ENCODE measurements at regions of chr16 and their contacts with region 1.

Region 1: DNA sequence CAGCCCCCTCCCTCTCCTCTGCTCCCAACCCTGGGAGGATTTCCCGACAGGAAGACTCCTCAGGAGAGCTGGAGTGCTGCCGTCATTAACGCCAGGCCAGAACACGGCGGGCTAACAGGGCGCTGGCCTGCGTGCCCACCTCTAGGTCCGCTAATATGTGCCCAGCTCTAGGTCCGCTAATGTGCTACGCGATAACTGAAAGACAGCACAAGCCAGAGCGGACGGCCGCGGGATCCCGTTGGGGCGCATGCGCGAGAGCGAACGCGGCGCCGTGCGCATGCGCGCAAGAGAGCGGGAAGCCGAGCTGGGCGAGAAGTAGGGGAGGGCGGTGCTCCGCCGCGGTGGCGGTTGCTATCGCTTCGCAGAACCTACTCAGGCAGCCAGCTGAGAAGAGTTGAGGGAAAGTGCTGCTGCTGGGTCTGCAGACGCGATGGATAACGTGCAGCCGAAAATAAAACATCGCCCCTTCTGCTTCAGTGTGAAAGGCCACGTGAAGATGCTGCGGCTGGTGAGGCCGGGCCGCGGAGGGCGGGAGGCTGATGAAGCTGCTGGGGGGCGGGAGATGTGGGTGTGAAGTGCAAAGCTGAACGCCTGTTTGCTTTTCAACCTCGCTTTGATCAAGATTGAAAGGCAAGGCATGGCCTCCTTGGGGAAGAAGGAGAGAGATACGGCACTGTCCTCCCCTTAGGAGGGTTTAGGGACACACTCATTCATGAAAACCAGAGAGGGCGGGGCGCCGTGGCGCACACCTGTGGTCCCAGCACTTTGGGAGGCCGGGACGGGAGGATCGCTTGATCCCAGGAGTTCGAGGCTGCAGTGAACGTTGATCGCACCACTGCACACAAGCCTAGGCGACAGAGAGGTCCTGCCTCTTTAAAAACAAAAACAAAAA is at the start of gene CKLF:
- DNase-seq: peak; percentile 87
- H3K4me3 ChIP-seq: peak within 1 kb of the TSS; percentile 55
- H3K27ac ChIP-seq: peak within 1 kb of the TSS; percentile 86
- H3K4me1 ChIP-seq: peaks cover 5% of the 10 kb centered on the region
- H3K27me3 ChIP-seq: no peaks in the 10 kb centered on the region
- CTCF ChIP-seq: no peak
- total RNA-seq, gene CKLF: 41.5 to 58.4 TPM

Region 2: DNA sequence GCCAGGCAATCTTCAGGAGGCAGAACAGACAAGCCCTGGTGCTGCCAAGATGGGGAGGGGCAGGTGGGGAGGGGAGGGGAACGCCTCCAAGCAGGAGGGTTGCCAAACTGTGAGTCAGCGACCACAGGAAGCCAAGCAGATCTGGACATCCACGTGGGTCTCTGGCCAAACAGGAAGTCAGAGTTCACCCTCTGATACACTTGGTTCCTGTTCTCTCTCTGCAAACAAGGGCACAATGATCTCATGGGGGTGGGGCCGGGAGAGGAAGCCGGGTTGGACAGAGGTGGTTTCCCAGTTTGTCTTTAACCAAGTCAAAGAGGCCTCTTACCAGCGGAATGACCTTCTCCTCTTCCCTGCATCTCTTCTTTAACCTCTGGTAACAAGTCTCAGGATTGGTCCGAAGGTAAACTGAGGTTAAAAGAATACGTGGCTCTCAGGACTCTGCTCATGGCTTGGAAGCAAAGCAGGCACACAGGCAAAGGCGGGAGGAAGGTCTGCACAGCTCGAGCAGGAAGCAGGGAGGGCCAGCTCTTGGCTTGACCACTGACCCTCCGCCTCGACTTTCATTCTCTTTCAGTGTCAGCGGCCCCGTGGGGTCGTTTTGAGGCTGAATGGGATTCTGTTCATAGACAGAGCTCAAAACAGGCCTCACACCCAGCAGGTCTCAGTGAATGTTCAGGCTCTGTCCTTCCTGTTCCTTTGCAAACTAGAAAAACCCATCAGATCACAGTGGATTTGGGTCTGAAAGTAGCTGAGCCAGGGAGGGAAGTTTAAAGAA is 35.5 kb before region 1 on chr16:
- intact Hi-C with region 1: loop called (anchors 5 kb)
- DNase-seq: peak; percentile 99
- H3K4me3 ChIP-seq: no peak overlapping the region
- H3K27ac ChIP-seq: peak overlapping the region; percentile 97
- H3K4me1 ChIP-seq: peaks cover 18% of the 10 kb centered on the region
- H3K27me3 ChIP-seq: no peaks in the 10 kb centered on the region
- CTCF ChIP-seq: no peak

Region 3: DNA sequence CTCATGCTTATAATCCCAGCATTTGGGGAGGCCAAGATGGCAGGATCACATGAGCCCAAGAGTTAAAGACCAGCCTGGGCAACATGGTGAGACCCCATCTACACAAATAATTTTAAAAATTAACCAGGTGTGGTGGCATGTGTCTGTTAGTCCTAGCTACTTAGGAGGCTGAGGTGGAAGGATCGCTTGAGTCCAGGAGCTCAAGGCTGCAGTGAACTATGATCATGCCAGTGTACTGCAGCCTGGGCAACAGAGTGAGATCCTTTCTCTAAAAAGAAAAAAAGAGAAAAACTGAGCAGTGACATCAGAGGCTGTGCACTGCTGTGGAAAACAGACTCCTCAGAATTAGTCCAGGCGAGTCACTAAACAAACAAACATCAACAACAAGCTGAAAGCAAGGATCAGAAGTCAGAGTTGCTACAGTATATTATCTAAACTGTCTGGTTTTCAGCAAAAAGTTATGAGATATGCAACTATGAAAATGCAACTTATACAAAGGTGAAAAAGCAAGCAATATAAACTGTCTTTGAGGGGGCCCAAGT is 515.8 kb after region 1 on chr16:
- intact Hi-C with region 1: no loop called
- DNase-seq: no peak
- H3K4me3 ChIP-seq: no peak overlapping the region
- H3K27ac ChIP-seq: no peak overlapping the region
- H3K4me1 ChIP-seq: no peaks in the 10 kb centered on the region
- H3K27me3 ChIP-seq: no peaks in the 10 kb centered on the region
- CTCF ChIP-seq: no peak

Measured in colonic mucosa (tissue), 4 donors.